H1 (cell line): ENCODE measurements at regions of chr11 and their contacts with region 1.

Region 1: DNA sequence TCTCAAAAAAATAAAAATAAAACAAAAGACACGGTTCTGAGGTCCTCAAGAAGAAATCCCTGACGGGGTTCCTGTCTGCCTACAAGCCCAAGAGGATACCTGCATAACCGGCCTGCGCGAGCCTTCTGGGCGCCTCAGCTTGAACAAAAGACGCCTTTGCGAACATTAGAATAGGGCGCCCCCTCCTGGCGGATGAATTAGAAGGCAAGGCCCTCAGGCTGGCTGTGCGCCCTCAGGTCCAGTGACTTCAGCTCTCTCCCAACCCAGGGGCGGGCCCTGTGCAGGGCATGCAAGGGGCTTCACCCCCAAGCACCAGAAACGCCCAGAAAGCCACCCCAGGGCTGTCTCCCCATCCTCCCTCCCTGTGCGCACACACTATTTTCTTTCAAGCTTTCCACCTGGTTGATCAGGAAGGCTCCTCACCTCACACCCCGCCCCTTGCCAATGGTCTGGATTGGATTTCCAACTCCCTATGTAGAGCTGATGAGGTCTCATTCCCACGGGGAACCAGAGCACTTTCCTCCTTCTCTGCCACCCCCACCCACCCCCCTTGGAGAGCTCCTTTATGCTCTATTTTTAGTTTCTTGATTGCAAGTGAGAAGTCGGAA is 273.3 kb downstream of the BUD13 start:
- DNase-seq: peak; percentile 87 to 99
- H3K4me3 ChIP-seq: no peak overlapping the region
- H3K27ac ChIP-seq: no peak overlapping the region
- H3K4me1 ChIP-seq: peaks cover 11 to 27% (median 15%) of the 10 kb centered on the region in 4 experiments
- H3K27me3 ChIP-seq: peaks cover 0 to 4% (median 1%) of the 10 kb centered on the region in 4 experiments; a peak in 2 of 7 replicates
- CTCF ChIP-seq: peak; percentile 74 to 91 (median 83)
- EP300 ChIP-seq: no peak
- POLR2A ChIP-seq: no peak
- RAD21 ChIP-seq: peak; percentile 85 to 94

Region 2: GRCh38 chr11:116249561-116249960 is 249.9 kb before region 1 on chr11:
- CTCF ChIA-PET with region 1: no interaction called
- POLR2A ChIA-PET with region 1: no interaction called
- DNase-seq: no peak
- H3K4me3 ChIP-seq: no peak overlapping the region
- H3K27ac ChIP-seq: no peak overlapping the region
- H3K4me1 ChIP-seq: peaks cover 0 to 3% (median 0%) of the 10 kb centered on the region in 4 experiments; a peak in 2 of 7 replicates
- H3K27me3 ChIP-seq: no peaks in the 10 kb centered on the region
- CTCF ChIP-seq: peak in 1 of 3 experiments; percentile 30; a peak in 2 of 4 replicates
- EP300 ChIP-seq: no peak
- POLR2A ChIP-seq: no peak
- RAD21 ChIP-seq: no peak

Region 3: GRCh38 chr11:116276051-116277044 is 223.2 kb before region 1 on chr11:
- CTCF ChIA-PET with region 1: interaction called, 30 read pairs
- POLR2A ChIA-PET with region 1: no interaction called
- DNase-seq: peak; percentile 86 to 99
- H3K4me3 ChIP-seq: peak overlapping the region; percentile 21 to 84 (median 67); a peak in 7 of 8 replicates
- H3K27ac ChIP-seq: peak overlapping the region; percentile 46; the same call in 1 of the 2 replicates
- H3K4me1 ChIP-seq: no peaks in the 10 kb centered on the region; a peak in 1 of 7 replicates
- H3K27me3 ChIP-seq: no peaks in the 10 kb centered on the region; a peak in 1 of 7 replicates
- CTCF ChIP-seq: peak; percentile 79 to 97 (median 91)
- EP300 ChIP-seq: no peak
- POLR2A ChIP-seq: no peak
- RAD21 ChIP-seq: peak; percentile 85 to 90

Region 4: GRCh38 chr11:116373104-116373944 is 126.2 kb before region 1 on chr11:
- CTCF ChIA-PET with region 1: interaction called, 14 read pairs
- POLR2A ChIA-PET with region 1: no interaction called
- DNase-seq: no peak
- H3K4me3 ChIP-seq: no peak overlapping the region
- H3K27ac ChIP-seq: no peak overlapping the region
- H3K4me1 ChIP-seq: no peaks in the 10 kb centered on the region; a peak in 1 of 7 replicates
- H3K27me3 ChIP-seq: no peaks in the 10 kb centered on the region
- CTCF ChIP-seq: no peak
- EP300 ChIP-seq: no peak
- POLR2A ChIP-seq: no peak
- RAD21 ChIP-seq: no peak

Region 5: DNA sequence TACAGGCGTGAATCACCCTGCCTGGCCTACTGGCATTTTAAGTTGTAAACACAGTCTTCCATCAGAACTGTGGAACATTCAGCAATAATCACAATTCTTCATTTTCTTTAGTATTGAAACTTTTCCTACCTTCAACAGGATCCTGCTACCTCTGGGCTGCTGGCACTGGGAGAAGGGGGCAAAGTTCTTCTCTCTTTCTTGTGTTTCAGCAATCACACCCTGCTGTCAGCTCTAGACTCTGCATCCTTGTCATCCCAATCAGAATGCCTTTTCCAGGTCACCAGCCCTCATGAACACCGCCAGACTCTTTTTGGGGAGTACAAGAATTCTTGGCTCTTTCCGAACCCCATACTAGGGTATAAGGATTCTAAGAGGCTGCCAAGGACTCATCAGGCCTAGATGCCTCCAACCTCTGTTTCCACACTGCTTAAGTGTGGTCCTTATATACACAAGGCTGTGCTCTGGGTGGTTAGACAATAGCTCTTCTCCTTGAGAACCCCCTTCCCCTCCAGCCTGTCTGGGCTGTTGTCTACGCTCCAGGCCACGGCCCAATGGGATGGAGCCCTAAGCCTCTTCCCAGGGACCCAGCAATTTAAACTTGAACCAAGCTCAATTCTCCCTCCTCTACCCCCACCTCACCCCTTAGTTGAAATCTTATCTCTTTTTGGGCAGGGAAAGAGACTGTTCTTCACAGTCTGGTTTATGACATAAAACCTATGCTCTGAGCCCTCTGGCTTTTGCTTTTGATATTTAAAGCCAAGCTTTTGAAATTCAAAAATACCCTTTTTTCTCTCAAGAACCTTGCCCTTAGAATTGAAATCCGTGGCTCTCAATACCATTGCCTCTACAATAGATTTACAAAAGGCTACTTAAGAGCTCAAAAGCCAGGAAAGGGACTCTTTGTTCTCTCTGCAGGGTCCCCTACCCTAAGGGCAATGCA is 54.1 kb before region 1 on chr11:
- CTCF ChIA-PET with region 1: interaction called, 14 read pairs
- POLR2A ChIA-PET with region 1: interaction called, 7 read pairs
- DNase-seq: peak; percentile 44 to 55
- H3K4me3 ChIP-seq: peak overlapping the region in 3 of 4 experiments; percentile 11 to 39 (median 12); a peak in 4 of 8 replicates
- H3K27ac ChIP-seq: peak overlapping the region; percentile 22; the same call in 1 of the 2 replicates
- H3K4me1 ChIP-seq: peaks cover 5 to 15% (median 12%) of the 10 kb centered on the region in 4 experiments; a peak in 6 of 7 replicates
- H3K27me3 ChIP-seq: no peaks in the 10 kb centered on the region
- CTCF ChIP-seq: no peak
- EP300 ChIP-seq: peak in 1 of 2 experiments; percentile 89; a peak in 2 of 3 replicates
- POLR2A ChIP-seq: no peak
- RAD21 ChIP-seq: no peak

Region 6: DNA sequence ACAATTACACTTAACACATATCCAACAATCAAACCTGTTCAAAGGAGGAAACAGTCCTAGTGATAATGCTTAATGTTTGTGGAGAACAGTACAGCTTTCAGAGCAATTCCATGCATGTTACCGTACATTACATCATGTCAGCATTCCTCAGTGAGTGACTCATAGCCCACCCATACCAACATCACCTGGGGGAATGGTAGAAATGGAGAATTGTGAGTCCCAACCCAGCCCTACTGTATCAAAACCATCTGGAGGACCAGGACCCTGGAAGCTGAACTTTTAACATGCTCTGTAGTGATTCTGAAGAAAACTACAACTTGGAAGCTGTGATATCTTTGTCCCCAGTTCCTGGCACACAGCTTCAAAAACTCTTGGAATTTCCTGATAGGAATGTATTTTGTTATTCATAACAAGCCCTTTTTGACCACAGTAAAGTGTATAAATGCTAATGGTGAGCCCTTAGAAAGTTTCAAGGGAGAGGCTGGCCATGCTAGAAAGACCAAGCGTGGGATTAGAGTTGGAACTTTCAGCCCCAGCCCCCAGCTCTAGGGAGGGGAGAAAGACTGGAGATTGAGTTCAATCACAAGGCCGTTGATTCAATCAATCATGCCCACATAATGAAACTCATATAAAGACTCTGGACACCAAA is 27.8 kb before region 1 on chr11:
- CTCF ChIA-PET with region 1: interaction called, 15 read pairs
- POLR2A ChIA-PET with region 1: no interaction called
- DNase-seq: no peak
- H3K4me3 ChIP-seq: no peak overlapping the region
- H3K27ac ChIP-seq: no peak overlapping the region
- H3K4me1 ChIP-seq: peaks cover 2 to 8% (median 7%) of the 10 kb centered on the region in 4 experiments; a peak in 5 of 7 replicates
- H3K27me3 ChIP-seq: no peaks in the 10 kb centered on the region; a peak in 1 of 7 replicates
- CTCF ChIP-seq: no peak
- EP300 ChIP-seq: no peak
- POLR2A ChIP-seq: no peak
- RAD21 ChIP-seq: no peak

Region 7: GRCh38 chr11:116513894-116514293 is 14.4 kb after region 1 on chr11:
- CTCF ChIA-PET with region 1: interaction called, 91 read pairs
- POLR2A ChIA-PET with region 1: interaction called, 3 read pairs
- DNase-seq: peak; percentile 47 to 89
- H3K4me3 ChIP-seq: no peak overlapping the region
- H3K27ac ChIP-seq: no peak overlapping the region
- H3K4me1 ChIP-seq: peaks cover 0 to 8% (median 2%) of the 10 kb centered on the region in 4 experiments; a peak in 3 of 7 replicates
- H3K27me3 ChIP-seq: peaks cover 0 to 4% (median 0%) of the 10 kb centered on the region in 4 experiments; a peak in 2 of 7 replicates
- CTCF ChIP-seq: peak; percentile 61 to 69 (median 65)
- EP300 ChIP-seq: no peak
- POLR2A ChIP-seq: no peak
- RAD21 ChIP-seq: peak; percentile 62 to 76

Region 8: GRCh38 chr11:116725434-116726221 is 226.1 kb after region 1 on chr11:
- CTCF ChIA-PET with region 1: no interaction called
- POLR2A ChIA-PET with region 1: no interaction called
- DNase-seq: no peak
- H3K4me3 ChIP-seq: no peak overlapping the region
- H3K27ac ChIP-seq: no peak overlapping the region
- H3K4me1 ChIP-seq: peaks cover 1 to 8% (median 5%) of the 10 kb centered on the region in 4 experiments
- H3K27me3 ChIP-seq: no peaks in the 10 kb centered on the region
- CTCF ChIP-seq: no peak
- EP300 ChIP-seq: no peak
- POLR2A ChIP-seq: no peak
- RAD21 ChIP-seq: no peak